GM18951 (cell line): ENCODE measurements at regions of chr1 and their contacts with region 1.

Region 1: DNA sequence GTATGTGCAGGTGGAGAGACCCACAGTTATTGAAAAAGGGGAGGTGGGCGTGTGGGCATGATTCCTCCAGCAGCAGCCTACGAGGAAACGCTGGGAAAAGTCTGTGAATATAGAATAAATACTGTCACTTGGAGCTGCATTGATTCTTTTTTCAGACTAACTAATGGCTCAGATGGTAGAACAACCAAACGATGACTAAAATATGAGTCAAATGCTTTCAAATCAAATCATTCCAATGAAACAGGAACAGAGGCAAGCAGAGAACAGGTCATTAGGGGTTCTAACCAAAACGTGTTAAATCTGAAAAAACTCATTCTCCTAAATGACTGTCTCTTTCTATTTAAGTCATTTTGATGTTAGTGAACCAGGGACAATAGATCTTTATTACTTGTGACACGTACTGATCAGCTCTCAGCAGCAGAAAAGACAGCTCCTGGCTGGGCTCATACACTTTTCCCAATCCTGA is 35.1 kb upstream of the SEC16B start:
- POLR2A ChIP-seq: no peak

Region 2: GRCh38 chr1:176522310-176522850 is 1482.6 kb before region 1 on chr1:
- in situ Hi-C with region 1: loop called (anchors 10 kb)
- POLR2A ChIP-seq: no peak

Region 3: DNA sequence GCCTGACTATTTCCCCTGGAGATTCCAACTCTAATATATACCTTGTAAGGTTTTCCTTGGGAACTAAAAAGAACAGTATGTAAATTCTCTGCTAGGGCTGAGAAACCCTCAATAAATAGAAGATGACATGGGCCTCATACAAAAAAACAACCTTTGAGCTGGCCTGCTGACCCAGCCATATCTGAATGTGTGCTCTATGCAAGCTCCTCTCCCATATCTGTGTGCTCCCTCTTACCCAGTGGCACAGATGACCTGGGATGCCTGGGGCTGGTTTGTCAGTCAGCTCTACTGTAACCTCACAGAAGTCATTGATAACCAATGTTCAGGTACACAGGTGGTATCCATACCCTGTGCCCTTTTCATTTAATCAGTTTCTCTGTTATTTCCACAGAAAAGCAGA is 364.3 kb before region 1 on chr1:
- in situ Hi-C with region 1: no loop called
- POLR2A ChIP-seq: no peak